MCF 10A (cell line): ENCODE measurements at regions of chr20 and their contacts with region 1.

Region 1: DNA sequence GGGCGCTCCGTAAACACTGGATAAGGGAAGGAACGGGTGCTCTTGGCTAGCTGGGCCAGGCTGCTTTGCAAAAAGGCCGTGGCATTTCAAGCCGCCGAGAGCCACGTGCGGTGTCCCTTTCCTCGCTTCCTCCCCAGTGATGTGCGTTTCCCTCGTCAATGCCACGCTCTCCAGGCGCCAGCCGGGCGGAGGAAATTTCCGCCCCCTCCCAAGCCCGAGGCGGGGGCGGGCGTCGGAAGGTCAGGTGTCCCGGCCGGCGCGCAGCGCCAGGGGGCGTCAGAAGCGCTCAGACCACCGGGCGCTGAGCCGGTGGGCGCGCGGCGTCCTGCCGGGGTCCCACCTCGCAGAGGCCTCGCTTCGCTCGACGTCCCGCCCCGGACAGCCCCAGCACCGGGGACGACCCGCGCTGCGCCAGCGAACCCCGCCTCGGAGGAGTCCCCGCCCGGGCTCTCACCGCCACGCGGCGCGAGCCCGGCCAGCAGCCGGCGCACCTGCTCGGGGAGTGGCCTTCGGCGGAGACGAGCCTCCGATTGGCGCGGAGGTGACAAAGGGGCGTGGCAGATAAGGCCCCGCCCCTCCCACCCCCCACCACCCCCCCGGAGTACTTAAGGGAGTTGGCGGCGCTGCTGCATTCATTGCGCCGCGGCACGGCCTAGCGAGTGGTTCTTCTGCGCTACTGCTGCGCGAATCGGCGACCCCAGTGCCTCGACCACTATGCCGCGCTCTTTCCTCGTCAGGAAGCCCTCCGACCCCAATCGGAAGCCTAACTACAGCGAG is at the start of gene SNAI1:
- DNase-seq: peak; percentile 86
- H3K4me3 Mint-ChIP-seq: peak within 1 kb of the TSS; percentile 55
- H3K27ac Mint-ChIP-seq: peak within 1 kb of the TSS; percentile 75
- H3K4me1 Mint-ChIP-seq: peaks cover 6% of the 10 kb centered on the region
- H3K27me3 Mint-ChIP-seq: peaks cover 19% of the 10 kb centered on the region
- CTCF ChIP-seq: peak; percentile 65
- total RNA-seq, gene SNAI1: 0.17 and 0.23 TPM in 2 replicates

Region 2: GRCh38 chr20:49964964-49965780 is 17.4 kb before region 1 on chr20:
- CTCF ChIA-PET with region 1: interaction called, 67 read pairs
- POLR2A ChIA-PET with region 1: interaction called, 6 read pairs
- intact Hi-C with region 1: no loop called
- DNase-seq: peak; percentile 53
- H3K4me3 Mint-ChIP-seq: no peak overlapping the region
- H3K27ac Mint-ChIP-seq: no peak overlapping the region
- H3K4me1 Mint-ChIP-seq: peaks cover 14% of the 10 kb centered on the region
- H3K27me3 Mint-ChIP-seq: no peaks in the 10 kb centered on the region
- CTCF ChIP-seq: peak; percentile 39

Region 3: DNA sequence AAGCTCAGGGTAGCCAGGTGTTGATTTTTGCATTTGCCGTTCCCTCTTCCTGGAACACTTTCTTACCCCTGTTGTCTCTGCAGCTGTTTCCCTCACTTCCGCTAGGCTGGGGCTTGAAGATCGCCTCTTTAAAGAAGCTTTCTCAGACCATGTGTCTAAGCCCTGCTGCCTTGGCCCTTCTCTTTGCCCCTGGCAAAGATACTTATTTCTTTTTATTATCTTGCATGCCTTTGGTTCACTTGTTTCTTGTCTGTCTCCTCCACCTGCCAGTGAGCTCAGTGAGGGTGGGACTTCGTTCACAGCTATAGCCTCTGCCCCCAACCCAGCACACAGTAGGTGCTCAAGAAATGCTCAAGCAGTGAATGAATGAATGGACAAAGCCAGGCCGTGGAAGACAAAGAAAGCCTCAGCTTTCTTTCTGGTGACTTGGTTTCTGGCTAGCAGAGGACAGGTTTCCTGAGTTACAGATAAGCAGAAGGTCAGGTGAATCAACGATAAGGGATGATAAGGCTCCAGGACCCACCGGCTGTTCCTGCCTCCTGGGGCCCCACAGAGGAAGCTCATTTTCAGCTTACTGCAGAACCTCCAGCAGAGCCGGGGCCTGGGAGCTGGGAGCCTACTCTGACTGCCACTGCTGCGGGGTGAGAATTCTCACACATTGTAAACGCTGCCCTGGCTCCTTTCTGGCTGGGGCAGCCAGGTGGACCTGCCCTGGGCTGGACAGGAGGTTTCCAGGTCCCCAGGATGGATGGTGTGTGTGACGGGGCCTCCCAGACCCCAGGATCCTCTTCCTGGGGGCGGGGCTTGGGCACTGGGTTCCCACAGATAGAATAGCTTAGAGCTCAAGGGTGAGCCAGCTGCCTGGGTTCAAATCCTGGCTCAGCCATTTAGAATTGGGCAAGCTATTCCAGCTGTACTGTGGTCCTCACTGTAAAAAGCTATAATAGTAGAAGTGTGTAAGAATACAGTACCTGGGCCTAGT is 30.0 kb after region 1 on chr20:
- CTCF ChIA-PET with region 1: interaction called, 17 read pairs
- POLR2A ChIA-PET with region 1: no interaction called
- intact Hi-C with region 1: no loop called
- DNase-seq: no peak
- H3K4me3 Mint-ChIP-seq: no peak overlapping the region
- H3K27ac Mint-ChIP-seq: no peak overlapping the region
- H3K4me1 Mint-ChIP-seq: no peaks in the 10 kb centered on the region
- H3K27me3 Mint-ChIP-seq: no peaks in the 10 kb centered on the region
- CTCF ChIP-seq: no peak

Region 4: DNA sequence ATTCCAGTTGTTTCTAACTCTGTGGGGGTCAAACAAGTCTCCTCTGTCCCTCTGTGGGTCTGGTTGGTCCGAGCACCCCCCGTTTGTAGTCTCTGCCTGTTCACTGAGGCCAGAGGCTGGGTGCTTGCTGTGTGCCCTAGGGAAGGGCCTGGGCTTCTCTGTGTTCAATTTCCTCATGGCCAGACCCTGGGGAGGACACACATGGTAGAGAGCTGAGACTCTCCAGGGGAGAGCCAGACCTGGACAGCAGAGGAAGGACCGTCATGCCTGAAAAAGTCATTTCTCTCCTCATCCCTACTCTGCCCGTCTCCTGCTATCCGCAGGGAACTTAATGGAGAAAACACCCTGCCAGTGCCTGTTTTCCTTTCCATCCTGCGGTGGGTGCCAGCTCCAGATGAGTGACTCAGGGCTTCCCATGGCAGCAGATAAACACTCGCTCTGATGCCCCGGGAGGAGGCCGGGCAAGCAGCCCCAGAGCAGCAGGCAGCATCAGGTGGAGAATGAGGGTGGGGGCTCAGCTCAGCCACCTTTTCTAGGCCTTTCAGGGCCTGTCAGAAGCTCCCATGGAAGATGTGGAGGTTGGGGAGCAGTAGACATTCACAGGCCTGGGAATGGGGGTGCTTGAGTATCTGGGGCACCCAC is 52.2 kb after region 1 on chr20:
- CTCF ChIA-PET with region 1: interaction called, 43 read pairs
- POLR2A ChIA-PET with region 1: no interaction called
- intact Hi-C with region 1: loop called (anchors 2 kb)
- DNase-seq: peak; percentile 88
- H3K4me3 Mint-ChIP-seq: no peak overlapping the region
- H3K27ac Mint-ChIP-seq: peak overlapping the region; percentile 81
- H3K4me1 Mint-ChIP-seq: peaks cover 30% of the 10 kb centered on the region
- H3K27me3 Mint-ChIP-seq: no peaks in the 10 kb centered on the region
- CTCF ChIP-seq: no peak

Region 5: GRCh38 chr20:50085452-50086365 is 103.2 kb after region 1 on chr20:
- CTCF ChIA-PET with region 1: interaction called, 57 read pairs
- POLR2A ChIA-PET with region 1: interaction called, 4 read pairs
- intact Hi-C with region 1: loop called (anchors 1 kb)
- DNase-seq: peak; percentile 75
- H3K4me3 Mint-ChIP-seq: peak overlapping the region; percentile 8
- H3K27ac Mint-ChIP-seq: peak overlapping the region; percentile 77
- H3K4me1 Mint-ChIP-seq: peaks cover 33% of the 10 kb centered on the region
- H3K27me3 Mint-ChIP-seq: no peaks in the 10 kb centered on the region
- CTCF ChIP-seq: peak; percentile 60

Region 6: DNA sequence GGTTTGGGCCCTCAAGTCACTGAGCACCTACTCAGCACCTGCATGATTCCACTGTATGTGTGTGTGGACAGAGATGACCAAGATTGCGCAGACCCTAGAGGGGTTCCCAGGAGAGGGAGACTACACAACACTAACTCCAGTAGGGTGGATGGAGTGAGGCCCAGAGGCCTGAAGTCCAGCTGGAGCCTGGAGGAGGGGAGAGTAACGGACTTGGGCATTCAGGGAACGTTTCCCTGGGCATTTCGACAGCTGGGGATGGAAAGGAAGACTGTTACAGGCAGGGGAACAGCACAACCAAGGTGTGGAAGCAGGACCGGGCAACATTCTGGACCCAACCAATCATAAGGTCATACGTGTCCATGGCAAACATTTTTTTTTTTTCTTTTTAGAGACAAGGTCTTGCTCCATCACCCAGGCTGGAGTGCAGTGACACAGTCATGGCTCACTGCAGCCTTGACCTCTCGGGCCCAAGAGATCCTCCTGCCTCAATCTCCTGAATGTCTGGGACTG is 197.0 kb after region 1 on chr20:
- CTCF ChIA-PET with region 1: interaction called, 18 read pairs
- POLR2A ChIA-PET with region 1: no interaction called
- intact Hi-C with region 1: no loop called
- DNase-seq: no peak
- H3K4me3 Mint-ChIP-seq: no peak overlapping the region
- H3K27ac Mint-ChIP-seq: no peak overlapping the region
- H3K4me1 Mint-ChIP-seq: peaks cover 5% of the 10 kb centered on the region
- H3K27me3 Mint-ChIP-seq: no peaks in the 10 kb centered on the region
- CTCF ChIP-seq: no peak

Region 7: GRCh38 chr20:50251992-50252511 is 269.5 kb after region 1 on chr20:
- CTCF ChIA-PET with region 1: no interaction called
- POLR2A ChIA-PET with region 1: no interaction called
- intact Hi-C with region 1: no loop called
- DNase-seq: no peak
- H3K4me3 Mint-ChIP-seq: no peak overlapping the region
- H3K27ac Mint-ChIP-seq: no peak overlapping the region
- H3K4me1 Mint-ChIP-seq: peaks cover 27% of the 10 kb centered on the region
- H3K27me3 Mint-ChIP-seq: no peaks in the 10 kb centered on the region
- CTCF ChIP-seq: no peak